Gastrocnemius medialis (tissue), 4 donors: ENCODE measurements at regions of chr19 and their contacts with region 1.

Region 1: GRCh38 chr19:796692-797527 is at the start of gene PTBP1:
- DNase-seq: peak; percentile 100
- ATAC-seq: peak; percentile 91
- H3K4me3 ChIP-seq: peak within 1 kb of the TSS; percentile 79 to 98 (median 92)
- H3K27ac ChIP-seq: peak within 1 kb of the TSS; percentile 91 to 99 (median 94)
- H3K4me1 ChIP-seq: peaks cover 48 to 50% of the 10 kb centered on the region in 2 donors
- H3K27me3 ChIP-seq: no peaks in the 10 kb centered on the region
- CTCF ChIP-seq: peak in 4 of 5 experiments; percentile 28 to 58 (median 38)
- POLR2A ChIP-seq: peak; percentile 83
- total RNA-seq, gene PTBP1: 29.8 to 51.7 (median 36.7) TPM

Region 2: GRCh38 chr19:633068-633785 is 163.7 kb before region 1 on chr19 and contains the start of gene POLRMT:
- in situ Hi-C with region 1: no loop called
- intact Hi-C with region 1: loop called (anchors 5 kb)
- DNase-seq: peak; percentile 98 to 99
- ATAC-seq: peak; percentile 100
- H3K4me3 ChIP-seq: peak within 1 kb of the TSS; percentile 75 to 99 (median 88)
- H3K27ac ChIP-seq: peak within 1 kb of the TSS; percentile 81 to 91 (median 86)
- H3K4me1 ChIP-seq: peaks cover 10 to 25% of the 10 kb centered on the region in 2 donors
- H3K27me3 ChIP-seq: no peaks in the 10 kb centered on the region
- CTCF ChIP-seq: peak in 1 of 5 experiments; percentile 25
- POLR2A ChIP-seq: peak; percentile 62 to 80
- total RNA-seq, gene POLRMT: 43.9 to 83.4 (median 73.8) TPM

Region 3: GRCh38 chr19:680287-681028 is 116.5 kb before region 1 on chr19:
- in situ Hi-C with region 1: no loop called
- intact Hi-C with region 1: loop called (anchors 1 kb)
- DNase-seq: peak; percentile 99 to 100
- ATAC-seq: peak; percentile 84 to 87
- H3K4me3 ChIP-seq: peak overlapping the region; percentile 56 to 89 (median 66)
- H3K27ac ChIP-seq: peak overlapping the region; percentile 77 to 89 (median 86)
- H3K4me1 ChIP-seq: peaks cover 0 to 28% of the 10 kb centered on the region in 2 donors
- H3K27me3 ChIP-seq: peaks cover 7 to 12% (median 9%) of the 10 kb centered on the region in 3 donors
- CTCF ChIP-seq: peak in 3 of 5 experiments; percentile 61 to 66 (median 65)
- POLR2A ChIP-seq: peak; percentile 55 to 78

Region 4: GRCh38 chr19:751501-752341 is 45.2 kb before region 1 on chr19:
- in situ Hi-C with region 1: no loop called
- intact Hi-C with region 1: no loop called
- DNase-seq: no peak
- ATAC-seq: no peak
- H3K4me3 ChIP-seq: no peak overlapping the region
- H3K27ac ChIP-seq: no peak overlapping the region
- H3K4me1 ChIP-seq: no peaks in the 10 kb centered on the region
- H3K27me3 ChIP-seq: peaks cover 6 to 23% (median 23%) of the 10 kb centered on the region in 3 donors
- CTCF ChIP-seq: no peak
- POLR2A ChIP-seq: no peak

Region 5: DNA sequence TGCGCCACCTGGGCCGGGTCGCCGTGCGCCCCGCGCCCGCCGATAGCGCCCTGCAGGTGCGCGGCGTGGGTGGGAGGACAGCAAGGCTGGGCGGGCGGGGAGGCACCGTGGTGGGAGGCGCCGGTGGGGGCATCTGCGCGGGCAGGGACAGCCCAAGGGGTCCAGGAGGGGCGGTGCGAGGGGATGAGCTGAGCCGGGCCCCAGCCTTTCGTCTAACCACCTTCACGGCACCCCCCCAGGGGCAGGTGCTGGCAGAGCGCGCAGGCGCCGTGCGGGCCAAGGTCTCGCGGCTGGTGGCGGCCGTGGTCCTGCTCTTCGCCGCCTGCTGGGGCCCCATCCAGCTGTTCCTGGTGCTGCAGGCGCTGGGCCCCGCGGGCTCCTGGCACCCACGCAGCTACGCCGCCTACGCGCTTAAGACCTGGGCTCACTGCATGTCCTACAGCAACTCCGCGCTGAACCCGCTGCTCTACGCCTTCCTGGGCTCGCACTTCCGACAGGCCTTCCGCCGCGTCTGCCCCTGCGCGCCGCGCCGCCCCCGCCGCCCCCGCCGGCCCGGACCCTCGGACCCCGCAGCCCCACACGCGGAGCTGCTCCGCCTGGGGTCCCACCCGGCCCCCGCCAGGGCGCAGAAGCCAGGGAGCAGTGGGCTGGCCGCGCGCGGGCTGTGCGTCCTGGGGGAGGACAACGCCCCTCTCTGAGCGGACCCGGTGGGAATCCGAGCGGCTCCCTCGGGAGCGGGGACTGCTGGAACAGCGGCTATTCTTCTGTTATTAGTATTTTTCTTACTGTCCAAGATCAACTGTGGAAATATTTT is 123.3 kb after region 1 on chr19:
- in situ Hi-C with region 1: no loop called
- intact Hi-C with region 1: loop called (anchors 2 kb)
- DNase-seq: no peak
- ATAC-seq: no peak
- H3K4me3 ChIP-seq: peak overlapping the region in 1 of 4 donors; percentile 25
- H3K27ac ChIP-seq: no peak overlapping the region
- H3K4me1 ChIP-seq: peaks cover 11 to 18% of the 10 kb centered on the region in 2 donors
- H3K27me3 ChIP-seq: peaks cover 37 to 57% (median 53%) of the 10 kb centered on the region in 3 donors
- CTCF ChIP-seq: no peak
- POLR2A ChIP-seq: no peak

Region 6: DNA sequence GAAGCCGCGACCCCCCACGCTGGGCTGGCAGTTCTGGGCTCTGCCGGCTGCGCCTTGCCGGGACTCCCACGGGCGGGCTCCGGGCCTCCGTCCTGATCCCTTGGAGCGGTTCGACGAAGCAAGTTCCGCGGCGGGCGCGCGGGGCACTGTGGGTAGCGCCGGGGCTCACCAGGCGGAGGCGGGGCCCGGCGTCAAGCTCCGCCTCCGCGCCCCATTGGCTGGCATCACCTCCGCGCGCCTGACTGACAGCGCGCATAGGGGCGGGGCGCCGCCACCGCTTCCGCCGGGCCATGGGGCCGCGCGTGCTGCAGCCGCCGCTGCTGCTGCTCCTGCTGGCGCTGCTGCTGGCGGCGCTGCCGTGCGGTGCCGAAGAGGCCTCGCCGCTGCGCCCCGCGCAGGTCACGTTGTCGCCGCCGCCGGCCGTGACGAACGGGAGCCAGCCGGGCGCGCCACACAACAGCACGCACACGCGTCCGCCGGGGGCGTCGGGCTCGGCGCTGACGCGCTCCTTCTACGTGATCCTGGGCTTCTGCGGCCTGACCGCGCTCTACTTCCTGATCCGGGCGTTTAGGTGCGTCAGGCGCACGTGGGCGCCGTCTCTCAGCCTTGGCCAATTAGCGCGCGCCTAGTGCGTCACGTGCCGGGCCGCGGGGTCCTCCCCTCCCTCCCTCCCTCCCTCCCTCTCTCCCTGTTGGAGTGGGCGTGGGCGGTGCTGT is 478.5 kb after region 1 on chr19 and contains the start of gene FAM174C:
- in situ Hi-C with region 1: no loop called
- intact Hi-C with region 1: loop called (anchors 10 kb)
- DNase-seq: peak; percentile 93 to 96
- ATAC-seq: peak; percentile 74 to 80
- H3K4me3 ChIP-seq: peak within 1 kb of the TSS; percentile 68 to 83 (median 76)
- H3K27ac ChIP-seq: peak within 1 kb of the TSS; percentile 92 to 99 (median 98)
- H3K4me1 ChIP-seq: peaks cover 57 to 58% of the 10 kb centered on the region in 2 donors
- H3K27me3 ChIP-seq: no peaks in the 10 kb centered on the region
- CTCF ChIP-seq: peak in 2 of 5 experiments; percentile 7 to 28
- POLR2A ChIP-seq: peak; percentile 80 to 91
- total RNA-seq, gene FAM174C: 18.7 to 36.7 (median 28.7) TPM